ENCODE measurements at regions of chr7 and their contacts with region 1.

Region 1: DNA sequence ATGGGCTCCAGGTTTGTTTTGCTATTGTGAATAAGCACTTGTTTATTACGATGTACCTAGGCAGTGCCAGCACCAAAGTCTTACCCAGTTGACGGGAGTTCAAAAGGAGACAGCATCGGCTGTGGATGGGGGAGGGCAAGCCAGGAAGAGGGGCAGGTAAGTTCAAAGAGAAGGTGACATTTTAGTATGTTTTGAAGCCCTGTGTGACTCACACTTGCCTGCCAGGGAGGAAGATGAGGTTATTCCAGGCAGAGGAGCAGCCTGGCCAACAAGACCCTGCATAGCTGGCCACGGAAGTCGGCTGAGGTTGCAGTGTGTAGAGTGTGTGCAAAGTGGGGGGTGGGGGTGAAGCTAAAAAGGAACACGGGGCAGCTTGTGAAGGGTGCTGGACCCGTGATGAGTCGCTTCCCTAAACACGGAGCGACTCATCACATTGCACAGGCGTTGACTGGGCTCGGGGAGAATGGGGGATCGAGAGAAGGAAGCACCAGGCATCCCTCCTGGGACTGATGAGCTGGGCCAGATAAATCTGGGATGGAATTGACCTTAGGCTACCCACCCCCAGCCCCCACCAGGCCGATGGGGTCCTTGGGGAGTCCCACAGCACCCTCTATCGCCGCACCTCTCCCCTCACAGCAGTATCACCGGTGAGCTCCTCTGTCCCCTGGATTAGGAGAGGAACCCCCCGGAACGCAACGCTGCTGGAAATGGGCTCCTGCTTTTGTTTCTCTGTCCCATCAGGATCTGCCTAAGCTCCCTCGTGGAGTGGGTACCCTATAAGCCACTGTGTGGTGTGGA is 97.9 kb upstream of the IKZF1 start:
- DNase-seq: peak; percentile 92
- ATAC-seq: peak; percentile 68
- H3K4me3 Mint-ChIP-seq: peak overlapping the region; percentile 60
- H3K27ac Mint-ChIP-seq: peak overlapping the region; percentile 97
- H3K4me1 Mint-ChIP-seq: peaks cover 94% of the 10 kb centered on the region
- H3K27me3 Mint-ChIP-seq: no peaks in the 10 kb centered on the region
- CTCF ChIP-seq: no peak

Region 2: DNA sequence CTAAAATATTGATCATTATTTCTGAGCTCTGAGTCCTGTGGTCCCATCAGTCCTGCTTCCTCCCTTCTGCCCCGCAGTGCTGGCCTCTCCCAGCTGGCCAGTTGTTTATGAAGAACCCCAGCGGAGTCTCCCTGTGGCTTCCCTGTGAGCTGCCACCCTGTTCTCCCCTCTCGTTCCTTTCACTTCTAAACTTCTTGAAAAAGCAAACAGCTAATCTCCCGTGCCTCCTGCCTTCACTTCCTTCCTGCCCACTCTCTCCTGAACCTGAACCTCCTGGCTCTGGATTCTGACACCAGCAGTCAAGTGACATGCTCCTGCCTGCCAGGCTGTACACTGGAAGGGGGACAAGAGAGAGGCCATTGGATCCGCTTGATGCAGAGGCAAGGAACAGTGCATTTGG is 49.9 kb before region 1 on chr7:
- CTCF ChIA-PET with region 1: interaction called, 11 read pairs
- POLR2A ChIA-PET with region 1: interaction called, 7 read pairs
- intact Hi-C with region 1: no loop called
- DNase-seq: no peak
- ATAC-seq: peak; percentile 11
- H3K4me3 Mint-ChIP-seq: peak overlapping the region; percentile 62
- H3K27ac Mint-ChIP-seq: peak overlapping the region; percentile 94
- H3K4me1 Mint-ChIP-seq: peaks cover 64% of the 10 kb centered on the region
- H3K27me3 Mint-ChIP-seq: no peaks in the 10 kb centered on the region
- CTCF ChIP-seq: no peak

Region 3: GRCh38 chr7:50272808-50273207 is 66.2 kb after region 1 on chr7:
- CTCF ChIA-PET with region 1: interaction called, 77 read pairs
- POLR2A ChIA-PET with region 1: interaction called, 34 read pairs
- intact Hi-C with region 1: no loop called
- DNase-seq: no peak
- ATAC-seq: no peak
- H3K4me3 Mint-ChIP-seq: no peak overlapping the region
- H3K27ac Mint-ChIP-seq: no peak overlapping the region
- H3K4me1 Mint-ChIP-seq: peaks cover 77% of the 10 kb centered on the region
- H3K27me3 Mint-ChIP-seq: no peaks in the 10 kb centered on the region
- CTCF ChIP-seq: no peak

Region 4: GRCh38 chr7:50304158-50304910 is 97.7 kb after region 1 on chr7 and contains the start of gene IKZF1:
- CTCF ChIA-PET with region 1: interaction called, 209 read pairs
- POLR2A ChIA-PET with region 1: interaction called, 376 read pairs
- intact Hi-C with region 1: loop called (anchors 2 kb)
- DNase-seq: peak; percentile 66
- ATAC-seq: peak; percentile 25
- H3K4me3 Mint-ChIP-seq: peak within 1 kb of the TSS; percentile 94
- H3K27ac Mint-ChIP-seq: peak within 1 kb of the TSS; percentile 97
- H3K4me1 Mint-ChIP-seq: peaks cover 33% of the 10 kb centered on the region
- H3K27me3 Mint-ChIP-seq: no peaks in the 10 kb centered on the region
- CTCF ChIP-seq: no peak
- total RNA-seq, gene IKZF1: 277 to 295 TPM

Region 5: DNA sequence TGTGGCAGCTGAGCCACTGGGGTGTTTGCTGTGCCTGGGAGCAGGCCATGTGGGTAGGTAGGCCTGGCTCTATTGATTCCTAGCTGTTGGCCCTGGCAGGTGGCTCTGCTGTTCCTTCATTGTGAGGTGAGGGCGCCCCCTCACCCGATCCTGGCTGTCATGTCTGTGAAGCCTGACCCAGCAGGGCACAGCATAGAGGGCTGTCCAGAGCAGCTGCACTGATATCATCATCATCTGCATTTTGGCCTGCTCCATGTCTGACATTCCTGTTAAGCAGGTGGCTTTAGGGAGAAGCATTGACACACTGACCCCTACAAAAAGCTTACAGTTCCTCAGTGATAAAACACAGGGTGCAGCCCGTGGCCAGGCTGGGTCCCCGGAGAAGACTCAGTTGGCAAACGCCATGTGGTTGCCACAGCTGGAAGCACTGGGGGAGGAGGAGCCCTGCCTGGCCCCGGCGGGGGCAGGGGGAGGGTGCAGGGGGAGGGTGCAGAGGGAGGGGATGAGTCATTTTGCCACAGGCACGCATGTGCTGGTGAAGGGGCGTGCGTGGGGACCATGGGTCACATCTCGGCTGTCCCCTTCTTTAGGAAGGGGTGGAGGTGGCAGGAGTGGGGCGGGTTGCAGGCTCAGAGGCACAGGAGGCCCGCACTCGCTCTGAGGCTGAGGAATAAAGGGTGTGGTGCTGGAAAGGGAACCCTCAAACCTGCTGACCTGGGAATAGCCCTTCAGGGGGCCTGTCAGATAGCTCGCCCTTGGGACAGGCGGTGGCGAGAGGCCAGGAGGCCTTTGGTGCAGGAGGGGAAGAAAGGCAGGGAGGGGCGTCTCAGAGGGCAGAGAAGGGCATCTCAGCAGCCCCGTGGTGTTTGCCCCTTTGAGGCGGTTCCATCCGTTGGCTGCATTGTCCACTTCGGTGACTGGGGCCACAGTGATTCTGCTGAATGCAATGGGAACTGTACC is 129.4 kb after region 1 on chr7:
- CTCF ChIA-PET with region 1: interaction called, 18 read pairs
- POLR2A ChIA-PET with region 1: interaction called, 34 read pairs
- intact Hi-C with region 1: no loop called
- DNase-seq: peak; percentile 93
- ATAC-seq: peak; percentile 53
- H3K4me3 Mint-ChIP-seq: no peak overlapping the region
- H3K27ac Mint-ChIP-seq: no peak overlapping the region
- H3K4me1 Mint-ChIP-seq: peaks cover 21% of the 10 kb centered on the region
- H3K27me3 Mint-ChIP-seq: no peaks in the 10 kb centered on the region
- CTCF ChIP-seq: no peak

Region 6: GRCh38 chr7:50359995-50360925 is 153.6 kb after region 1 on chr7:
- CTCF ChIA-PET with region 1: interaction called, 145 read pairs
- POLR2A ChIA-PET with region 1: interaction called, 43 read pairs
- intact Hi-C with region 1: no loop called
- DNase-seq: peak; percentile 90
- ATAC-seq: peak; percentile 75
- H3K4me3 Mint-ChIP-seq: peak overlapping the region; percentile 69
- H3K27ac Mint-ChIP-seq: peak overlapping the region; percentile 99
- H3K4me1 Mint-ChIP-seq: peaks cover 93% of the 10 kb centered on the region
- H3K27me3 Mint-ChIP-seq: no peaks in the 10 kb centered on the region
- CTCF ChIP-seq: no peak

Region 7: GRCh38 chr7:50418086-50418515 is 211.4 kb after region 1 on chr7:
- CTCF ChIA-PET with region 1: interaction called, 108 read pairs
- POLR2A ChIA-PET with region 1: interaction called, 6 read pairs
- intact Hi-C with region 1: loop called (anchors 5 kb)
- DNase-seq: peak; percentile 90
- ATAC-seq: peak; percentile 93
- H3K4me3 Mint-ChIP-seq: no peak overlapping the region
- H3K27ac Mint-ChIP-seq: no peak overlapping the region
- H3K4me1 Mint-ChIP-seq: peaks cover 26% of the 10 kb centered on the region
- H3K27me3 Mint-ChIP-seq: no peaks in the 10 kb centered on the region
- CTCF ChIP-seq: peak; percentile 90

Region 8: DNA sequence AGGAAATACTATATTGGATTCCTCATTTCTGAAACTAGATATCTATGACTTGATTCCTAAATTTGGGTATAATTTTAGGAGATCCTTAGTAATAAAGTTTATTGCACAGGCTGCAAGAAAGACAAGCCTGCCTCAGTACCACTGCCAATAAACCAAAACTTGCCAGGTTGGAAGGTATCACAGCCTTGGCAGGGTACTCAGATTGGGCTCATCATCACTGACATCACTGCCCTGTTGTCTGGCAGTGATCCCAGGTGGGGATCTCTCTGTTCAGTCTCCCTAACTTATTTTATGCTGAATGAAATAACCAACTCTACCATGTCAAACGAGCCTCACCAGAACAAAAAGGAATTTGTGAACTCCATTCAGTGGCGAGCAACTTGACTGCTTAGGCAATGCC is 224.7 kb after region 1 on chr7:
- CTCF ChIA-PET with region 1: no interaction called
- POLR2A ChIA-PET with region 1: no interaction called
- intact Hi-C with region 1: no loop called
- DNase-seq: no peak
- ATAC-seq: no peak
- H3K4me3 Mint-ChIP-seq: no peak overlapping the region
- H3K27ac Mint-ChIP-seq: no peak overlapping the region
- H3K4me1 Mint-ChIP-seq: no peaks in the 10 kb centered on the region
- H3K27me3 Mint-ChIP-seq: no peaks in the 10 kb centered on the region
- CTCF ChIP-seq: no peak